Caco-2 (cell line): ENCODE measurements at regions of chr7 and their contacts with region 1.

Region 1: GRCh38 chr7:78852951-78853350 is 600.5 kb downstream of the MAGI2 start:
- DNase-seq: no peak
- H3K4me3 ChIP-seq: no peak overlapping the region
- H3K4me3 Mint-ChIP-seq: no peak overlapping the region
- H3K27ac Mint-ChIP-seq: no peak overlapping the region
- H3K4me1 ChIP-seq: no peaks in the 10 kb centered on the region; the same call in 1 of the 2 replicates
- H3K4me1 Mint-ChIP-seq: no peaks in the 10 kb centered on the region
- H3K27me3 ChIP-seq: no peaks in the 10 kb centered on the region
- H3K27me3 Mint-ChIP-seq: no peaks in the 10 kb centered on the region
- CTCF ChIP-seq: no peak

Region 2: DNA sequence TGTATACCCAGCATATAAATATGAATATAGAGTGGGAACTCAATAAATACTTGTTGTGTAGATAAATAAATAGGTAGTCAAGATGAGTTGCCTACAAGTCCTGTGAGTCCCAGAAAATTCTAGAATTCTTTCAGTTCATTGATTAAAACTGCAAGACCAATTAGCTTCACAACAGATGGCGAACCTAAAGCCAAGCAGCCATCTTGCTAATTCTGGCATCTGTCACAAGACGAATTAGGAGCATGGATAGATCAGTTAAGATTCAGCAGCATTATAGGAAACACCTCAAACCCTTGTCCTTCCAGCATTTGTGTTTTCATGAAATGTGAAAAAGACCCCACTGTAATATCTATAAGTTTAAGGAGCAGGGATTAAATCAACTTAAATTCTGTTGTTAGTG is 47.9 kb after region 1 on chr7:
- CTCF ChIA-PET with region 1: no interaction called
- POLR2A ChIA-PET with region 1: no interaction called
- intact Hi-C with region 1: loop called (anchors 1 kb)
- DNase-seq: no peak
- H3K4me3 ChIP-seq: no peak overlapping the region
- H3K4me3 Mint-ChIP-seq: no peak overlapping the region
- H3K27ac Mint-ChIP-seq: no peak overlapping the region
- H3K4me1 ChIP-seq: no peaks in the 10 kb centered on the region
- H3K4me1 Mint-ChIP-seq: no peaks in the 10 kb centered on the region
- H3K27me3 ChIP-seq: no peaks in the 10 kb centered on the region
- H3K27me3 Mint-ChIP-seq: no peaks in the 10 kb centered on the region
- CTCF ChIP-seq: no peak